PC-9 (cell line): ENCODE measurements at regions of chr9 and their contacts with region 1.

Region 1: DNA sequence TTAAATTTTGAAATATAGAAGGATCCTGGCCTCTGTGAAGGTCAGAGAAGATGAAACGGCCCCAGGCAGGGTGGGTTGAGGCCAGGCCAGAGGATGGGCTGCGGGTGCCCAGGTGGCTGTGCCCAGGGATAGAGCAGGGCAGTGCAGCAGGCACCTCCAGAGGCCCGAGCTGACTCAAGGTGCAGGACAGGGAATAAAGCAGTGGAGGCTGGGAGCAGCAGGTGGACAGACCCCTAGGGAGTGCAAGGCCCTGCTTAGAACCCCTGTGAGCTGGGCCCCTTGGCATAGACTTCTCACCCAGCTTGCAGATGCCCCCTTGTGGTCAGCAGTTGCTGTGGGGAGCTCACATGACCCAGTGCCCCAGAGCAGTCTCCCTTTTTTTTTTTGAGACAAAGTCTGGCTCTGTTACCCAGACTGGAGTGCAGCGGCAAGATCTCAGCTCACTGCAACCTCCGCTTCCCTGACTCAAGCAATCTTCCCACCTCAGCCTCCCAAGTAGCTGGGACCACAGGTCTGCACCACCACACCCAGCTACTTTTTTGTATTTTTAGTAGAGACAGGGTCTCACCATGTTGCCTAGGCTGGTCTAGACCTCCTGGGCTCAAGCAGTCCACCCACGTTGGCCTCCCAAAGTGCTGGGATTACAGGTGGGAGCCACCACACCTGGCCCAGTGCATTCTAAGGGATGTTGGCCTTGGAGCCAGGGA is 118.8 kb downstream of the WNK2 start:
- DNase-seq: peak; percentile 61 to 77
- H3K4me3 ChIP-seq: no peak overlapping the region
- H3K27ac ChIP-seq: no peak overlapping the region
- H3K4me1 ChIP-seq: no peaks in the 10 kb centered on the region
- H3K27me3 ChIP-seq: no peaks in the 10 kb centered on the region
- CTCF ChIP-seq: peak; percentile 84

Region 2: DNA sequence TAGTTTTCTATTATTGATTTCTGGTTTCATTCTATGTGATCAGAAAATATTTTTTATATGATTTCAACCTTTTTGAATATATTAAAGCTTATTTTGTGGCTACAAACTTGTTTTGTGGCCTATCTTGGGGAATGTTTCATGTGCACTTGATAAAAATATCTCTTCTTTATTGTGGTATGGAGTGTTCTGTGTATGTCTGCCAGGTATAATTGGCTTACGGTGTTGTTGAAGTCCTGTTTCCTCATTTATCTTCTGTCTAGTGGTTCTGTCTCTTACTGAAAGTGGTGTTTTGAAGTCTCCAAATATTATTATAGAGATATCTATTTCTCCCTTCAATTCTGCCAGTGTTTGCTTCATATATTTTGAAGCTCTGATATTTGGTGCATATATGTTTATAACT is 197.1 kb before region 1 on chr9:
- CTCF ChIA-PET with region 1: interaction called, 8 read pairs
- POLR2A ChIA-PET with region 1: interaction called, 18 read pairs
- intact Hi-C with region 1: loop called (anchors 1 kb)
- DNase-seq: no peak
- H3K4me3 ChIP-seq: no peak overlapping the region
- H3K27ac ChIP-seq: no peak overlapping the region; the same call in 1 of the 2 replicates
- H3K4me1 ChIP-seq: peaks cover 37% of the 10 kb centered on the region
- H3K27me3 ChIP-seq: no peaks in the 10 kb centered on the region
- CTCF ChIP-seq: no peak

Region 3: GRCh38 chr9:93159601-93160471 is 142.9 kb before region 1 on chr9:
- CTCF ChIA-PET with region 1: interaction called, 12 read pairs
- POLR2A ChIA-PET with region 1: no interaction called
- intact Hi-C with region 1: loop called (anchors 1 kb)
- DNase-seq: peak; percentile 60 to 95
- H3K4me3 ChIP-seq: no peak overlapping the region
- H3K27ac ChIP-seq: no peak overlapping the region
- H3K4me1 ChIP-seq: no peaks in the 10 kb centered on the region; the same call in 1 of the 2 replicates
- H3K27me3 ChIP-seq: no peaks in the 10 kb centered on the region
- CTCF ChIP-seq: peak; percentile 98

Region 4: DNA sequence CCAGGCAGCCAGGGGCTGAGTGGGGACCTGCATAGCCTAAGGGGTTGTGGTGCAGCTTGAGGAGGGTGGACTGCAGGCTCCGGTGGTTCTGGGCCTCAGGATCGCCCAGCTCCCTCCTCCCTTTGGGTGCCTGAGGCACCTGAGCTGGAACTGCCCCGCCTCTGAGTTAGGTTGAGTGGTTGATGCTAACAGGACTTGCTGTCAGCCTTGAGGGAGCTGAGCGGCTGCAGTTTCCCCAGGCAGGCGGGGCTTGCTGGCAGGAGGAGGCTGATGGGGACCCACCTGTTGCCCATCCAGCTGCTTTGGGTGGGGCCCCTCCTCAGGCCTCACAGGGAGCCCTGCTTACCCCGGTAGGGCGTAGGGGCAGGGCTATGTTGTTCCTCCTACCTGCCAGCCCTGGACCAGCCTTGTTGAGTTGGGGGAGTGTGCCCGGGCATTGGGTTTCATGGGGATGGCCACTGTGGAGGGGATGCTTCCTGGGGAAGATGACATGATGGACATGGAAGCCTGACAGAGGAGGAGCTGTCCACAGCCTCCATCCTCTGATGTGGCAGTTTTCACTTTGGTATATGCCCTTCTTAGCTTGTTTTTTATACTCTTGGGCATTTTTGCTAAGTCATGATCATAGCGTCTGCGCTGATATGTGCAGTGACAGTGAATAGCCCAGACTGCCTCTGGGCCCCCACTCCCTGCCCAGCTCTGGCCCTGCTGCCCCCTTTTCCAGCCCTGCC is 104.4 kb before region 1 on chr9:
- CTCF ChIA-PET with region 1: no interaction called
- POLR2A ChIA-PET with region 1: interaction called, 10 read pairs
- intact Hi-C with region 1: no loop called
- DNase-seq: peak in 1 of 2 experiments; percentile 38
- H3K4me3 ChIP-seq: no peak overlapping the region
- H3K27ac ChIP-seq: no peak overlapping the region
- H3K4me1 ChIP-seq: peaks cover 23% of the 10 kb centered on the region
- H3K27me3 ChIP-seq: no peaks in the 10 kb centered on the region
- CTCF ChIP-seq: no peak

Region 5: DNA sequence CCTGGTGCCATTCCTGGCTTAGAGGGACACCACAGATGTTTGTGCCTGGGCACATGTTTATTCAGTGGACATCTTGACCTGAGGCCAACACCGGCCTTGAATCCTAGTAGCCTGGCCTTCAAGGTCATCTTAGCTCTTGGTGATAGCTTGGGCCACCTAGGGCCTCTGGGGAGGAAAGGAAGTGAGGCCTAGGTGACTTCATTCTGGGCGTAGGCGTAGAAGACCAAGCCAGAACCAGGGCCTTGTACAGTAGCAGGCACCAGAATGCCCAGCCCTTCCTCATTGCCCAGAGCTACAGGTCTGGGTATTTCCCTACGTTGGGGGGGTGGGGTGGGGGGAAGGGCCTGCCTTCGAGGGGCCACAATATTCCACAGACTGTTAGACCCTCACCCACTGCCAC is 85.0 kb before region 1 on chr9:
- CTCF ChIA-PET with region 1: interaction called, 4 read pairs
- POLR2A ChIA-PET with region 1: no interaction called
- intact Hi-C with region 1: loop called (anchors 1 kb)
- DNase-seq: peak in 1 of 2 experiments; percentile 65
- H3K4me3 ChIP-seq: no peak overlapping the region
- H3K27ac ChIP-seq: no peak overlapping the region
- H3K4me1 ChIP-seq: peaks cover 17% of the 10 kb centered on the region
- H3K27me3 ChIP-seq: no peaks in the 10 kb centered on the region
- CTCF ChIP-seq: no peak

Region 6: GRCh38 chr9:93612796-93613154 is 310.1 kb after region 1 on chr9:
- CTCF ChIA-PET with region 1: no interaction called
- POLR2A ChIA-PET with region 1: no interaction called
- intact Hi-C with region 1: no loop called
- DNase-seq: no peak
- H3K4me3 ChIP-seq: no peak overlapping the region
- H3K27ac ChIP-seq: no peak overlapping the region
- H3K4me1 ChIP-seq: no peaks in the 10 kb centered on the region
- H3K27me3 ChIP-seq: no peaks in the 10 kb centered on the region
- CTCF ChIP-seq: no peak